ENCODE measurements at regions of chr10 and their contacts with region 1.

Region 1: DNA sequence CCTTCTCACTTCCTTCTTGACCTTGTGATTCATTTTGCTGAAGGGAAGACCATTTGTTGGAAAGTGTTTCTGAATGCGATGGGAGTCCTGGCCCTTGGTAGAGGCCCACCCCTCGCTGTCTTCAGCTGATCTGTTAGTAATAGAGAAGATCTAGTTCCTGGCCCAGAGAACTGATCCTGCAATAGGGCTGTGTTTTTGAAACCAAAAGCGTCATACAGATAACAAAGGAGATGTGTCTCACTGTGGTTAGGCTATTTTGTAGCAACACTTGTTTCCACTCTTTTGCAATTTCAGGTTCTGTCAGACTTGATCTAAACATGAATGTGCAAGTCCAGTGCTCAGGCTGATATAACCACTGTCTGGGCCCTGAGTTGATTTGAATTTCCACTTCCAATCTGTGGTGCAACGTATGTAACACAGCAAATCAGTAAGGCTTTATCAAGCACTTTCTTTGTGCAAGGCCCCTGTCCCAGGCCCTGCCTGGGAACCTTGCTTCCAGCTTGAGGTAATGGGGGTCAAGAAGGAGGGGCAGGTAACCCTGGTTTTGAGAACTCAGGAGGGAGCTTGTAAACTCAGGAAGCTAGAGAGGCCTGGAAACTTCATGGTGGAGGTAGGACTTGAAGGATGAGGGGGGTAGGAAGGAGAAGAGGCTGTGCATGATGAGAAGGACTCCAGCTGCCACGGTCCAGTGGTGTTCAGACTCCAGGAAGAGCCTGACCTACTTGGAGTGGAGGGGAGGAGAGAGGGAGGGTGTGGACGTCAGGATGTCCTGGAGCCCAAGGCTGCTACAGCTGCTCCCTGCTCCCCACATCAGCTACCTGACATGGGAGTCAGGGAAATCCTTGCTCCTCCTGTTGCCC is 42.2 kb upstream of the SRGN start:
- DNase-seq: peak in 7 of 9 donors; percentile 22 to 65 (median 44)
- ATAC-seq: peak; percentile 83
- H3K4me3 ChIP-seq: no peak overlapping the region
- H3K4me3 Mint-ChIP-seq: peak overlapping the region in 9 of 10 donors; percentile 50 to 80 (median 67)
- H3K27ac ChIP-seq: peak overlapping the region; percentile 61
- H3K27ac Mint-ChIP-seq: peak overlapping the region; percentile 86 to 99 (median 91)
- H3K4me1 ChIP-seq: peaks cover 23 to 38% of the 10 kb centered on the region in 2 donors
- H3K4me1 Mint-ChIP-seq: peaks cover 11 to 44% (median 30%) of the 10 kb centered on the region in 7 donors
- H3K27me3 ChIP-seq: no peaks in the 10 kb centered on the region
- H3K27me3 Mint-ChIP-seq: no peaks in the 10 kb centered on the region

Region 2: GRCh38 chr10:69004821-69005220 is 40.9 kb before region 1 on chr10:
- CTCF ChIA-PET with region 1: interaction called, 9 read pairs
- POLR2A ChIA-PET with region 1: no interaction called
- intact Hi-C with region 1: loop called (anchors 1 to 5 kb)
- DNase-seq: peak in 7 of 9 donors; percentile 42 to 72 (median 60)
- ATAC-seq: peak; percentile 74
- H3K4me3 ChIP-seq: no peak overlapping the region
- H3K4me3 Mint-ChIP-seq: no peak overlapping the region
- H3K27ac ChIP-seq: no peak overlapping the region
- H3K27ac Mint-ChIP-seq: peak overlapping the region in 4 of 9 donors; percentile 23 to 43 (median 28)
- H3K4me1 ChIP-seq: peaks cover 0 to 3% of the 10 kb centered on the region in 2 donors
- H3K4me1 Mint-ChIP-seq: peaks cover 0 to 11% (median 5%) of the 10 kb centered on the region in 7 donors
- H3K27me3 ChIP-seq: no peaks in the 10 kb centered on the region
- H3K27me3 Mint-ChIP-seq: no peaks in the 10 kb centered on the region

Region 3: DNA sequence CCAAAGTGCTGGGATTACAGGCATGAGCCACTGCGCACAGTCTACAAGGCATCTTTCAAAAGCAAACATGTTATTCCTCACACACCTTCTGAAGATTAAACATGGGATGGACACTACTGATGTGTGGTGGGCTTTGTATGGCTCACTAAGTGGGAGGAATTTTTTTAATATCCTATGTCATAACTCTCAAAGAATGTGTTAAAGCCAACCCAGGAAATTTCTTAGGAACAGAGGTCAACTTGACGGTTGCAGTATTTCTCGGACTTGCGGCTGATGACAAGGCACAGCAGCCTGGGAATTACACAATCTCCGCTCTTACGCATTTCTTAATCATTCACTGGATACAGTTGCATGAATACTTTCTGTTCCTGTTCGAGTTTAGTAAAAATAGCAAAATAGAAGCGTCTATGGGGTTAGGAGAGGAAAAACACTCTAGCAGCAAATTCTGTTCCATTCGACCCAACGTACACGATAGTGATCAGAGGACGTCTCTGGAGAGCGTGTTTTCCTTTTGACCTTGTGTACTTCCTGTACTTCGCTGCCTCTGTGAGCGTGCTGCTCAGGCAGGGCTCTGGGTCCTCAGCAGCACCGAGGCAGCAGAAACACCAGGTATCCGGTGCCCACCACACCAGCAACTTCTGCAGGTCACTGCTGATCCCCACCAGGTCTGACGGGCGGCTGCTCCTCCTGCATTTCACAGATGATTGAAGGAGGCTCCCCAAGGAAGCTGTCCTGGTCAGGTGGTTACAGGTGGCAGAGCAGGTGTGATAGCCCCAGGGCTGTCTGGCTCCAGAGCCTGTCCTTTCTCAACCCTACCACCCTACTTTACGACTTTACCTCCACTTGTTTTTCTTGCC is 15.9 kb after region 1 on chr10:
- CTCF ChIA-PET with region 1: interaction called, 3 read pairs
- POLR2A ChIA-PET with region 1: interaction called, 3 read pairs
- intact Hi-C with region 1: loop called in 1 of 2 experiments (anchors 1 kb)
- DNase-seq: peak in 7 of 9 donors; percentile 17 to 52 (median 50)
- ATAC-seq: peak; percentile 72
- H3K4me3 ChIP-seq: peak overlapping the region; percentile 15
- H3K4me3 Mint-ChIP-seq: peak overlapping the region; percentile 73 to 90 (median 83)
- H3K27ac ChIP-seq: peak overlapping the region; percentile 50
- H3K27ac Mint-ChIP-seq: peak overlapping the region; percentile 70 to 96 (median 90)
- H3K4me1 ChIP-seq: peaks cover 25% of the 10 kb centered on the region in 2 donors
- H3K4me1 Mint-ChIP-seq: peaks cover 33 to 60% (median 38%) of the 10 kb centered on the region in 7 donors
- H3K27me3 ChIP-seq: no peaks in the 10 kb centered on the region
- H3K27me3 Mint-ChIP-seq: no peaks in the 10 kb centered on the region

Region 4: GRCh38 chr10:69087590-69088470 is 42.2 kb after region 1 on chr10 and contains the start of gene SRGN:
- CTCF ChIA-PET with region 1: interaction called, 5 read pairs
- POLR2A ChIA-PET with region 1: interaction called, 6 read pairs
- intact Hi-C with region 1: loop called (anchors 1 kb)
- DNase-seq: peak; percentile 54 to 94 (median 87)
- ATAC-seq: peak; percentile 76
- H3K4me3 ChIP-seq: peak within 1 kb of the TSS; percentile 84
- H3K4me3 Mint-ChIP-seq: peak within 1 kb of the TSS; percentile 85 to 95 (median 93)
- H3K27ac ChIP-seq: peak within 1 kb of the TSS; percentile 97
- H3K27ac Mint-ChIP-seq: peak within 1 kb of the TSS; percentile 93 to 99 (median 98)
- H3K4me1 ChIP-seq: peaks cover 28 to 46% of the 10 kb centered on the region in 2 donors
- H3K4me1 Mint-ChIP-seq: peaks cover 25 to 66% (median 58%) of the 10 kb centered on the region in 7 donors
- H3K27me3 ChIP-seq: no peaks in the 10 kb centered on the region
- H3K27me3 Mint-ChIP-seq: no peaks in the 10 kb centered on the region
- total RNA-seq, gene SRGN: 66.6 to 748 (median 227) TPM

Region 5: GRCh38 chr10:69092959-69093850 is 47.5 kb after region 1 on chr10:
- CTCF ChIA-PET with region 1: interaction called, 5 read pairs
- POLR2A ChIA-PET with region 1: interaction called, 6 read pairs
- intact Hi-C with region 1: loop called (anchors 1 kb)
- DNase-seq: peak; percentile 43 to 89 (median 85)
- ATAC-seq: peak; percentile 61
- H3K4me3 ChIP-seq: peak overlapping the region; percentile 19
- H3K4me3 Mint-ChIP-seq: peak overlapping the region in 7 of 10 donors; percentile 4 to 36 (median 15)
- H3K27ac ChIP-seq: peak overlapping the region; percentile 54
- H3K27ac Mint-ChIP-seq: peak overlapping the region; percentile 23 to 90 (median 63)
- H3K4me1 ChIP-seq: peaks cover 28 to 37% of the 10 kb centered on the region in 2 donors
- H3K4me1 Mint-ChIP-seq: peaks cover 23 to 64% (median 55%) of the 10 kb centered on the region in 7 donors
- H3K27me3 ChIP-seq: no peaks in the 10 kb centered on the region
- H3K27me3 Mint-ChIP-seq: no peaks in the 10 kb centered on the region

Measured in naive thymus-derived CD4-positive, alpha-beta T cell (primary cell).